ENCODE measurements at regions of chr6 and their contacts with region 1.

Region 1: DNA sequence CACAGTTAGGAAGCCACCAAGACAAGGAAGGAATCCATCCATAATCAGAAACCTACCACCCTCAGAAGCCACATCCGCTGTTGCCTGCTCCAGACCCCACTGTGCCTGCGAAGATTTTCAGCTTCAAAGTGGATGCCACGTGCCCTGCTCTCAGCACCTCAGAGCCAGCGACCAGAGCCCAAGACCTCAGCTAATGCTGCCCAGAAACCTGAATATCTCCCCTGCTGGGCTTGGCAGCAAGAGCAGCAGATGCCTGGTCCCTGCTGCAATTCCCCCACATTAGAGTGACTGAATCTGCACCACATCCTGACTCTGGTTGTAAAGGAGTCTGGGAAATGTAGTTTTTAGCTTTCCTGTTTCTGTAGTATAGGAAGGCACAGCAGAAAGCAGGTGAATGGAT is 10.7 kb upstream of the ULBP3 start:
- DNase-seq: peak in 1 of 2 donors; percentile 43
- H3K4me3 ChIP-seq: no peak overlapping the region
- H3K27ac ChIP-seq: no peak overlapping the region
- H3K4me1 ChIP-seq: no peaks in the 10 kb centered on the region
- H3K27me3 ChIP-seq: no peaks in the 10 kb centered on the region
- CTCF ChIP-seq: no peak

Region 2: GRCh38 chr6:150004783-150005717 is 74.6 kb before region 1 on chr6:
- intact Hi-C with region 1: no loop called
- DNase-seq: peak; percentile 77 to 95
- H3K4me3 ChIP-seq: peak overlapping the region; percentile 45 to 78
- H3K27ac ChIP-seq: no peak overlapping the region
- H3K4me1 ChIP-seq: peaks cover 4 to 11% of the 10 kb centered on the region in 2 donors
- H3K27me3 ChIP-seq: peaks cover 11% of the 10 kb centered on the region
- CTCF ChIP-seq: no peak

Region 3: GRCh38 chr6:150334790-150335783 is 255.5 kb after region 1 on chr6:
- intact Hi-C with region 1: loop called (anchors 1 kb)
- DNase-seq: no peak
- H3K4me3 ChIP-seq: no peak overlapping the region
- H3K27ac ChIP-seq: no peak overlapping the region
- H3K4me1 ChIP-seq: no peaks in the 10 kb centered on the region
- H3K27me3 ChIP-seq: no peaks in the 10 kb centered on the region
- CTCF ChIP-seq: peak; percentile 43 to 77 (median 57)

Region 4: GRCh38 chr6:150395398-150396009 is 315.9 kb after region 1 on chr6:
- intact Hi-C with region 1: loop called (anchors 1 kb)
- DNase-seq: no peak
- H3K4me3 ChIP-seq: no peak overlapping the region
- H3K27ac ChIP-seq: no peak overlapping the region
- H3K4me1 ChIP-seq: no peaks in the 10 kb centered on the region
- H3K27me3 ChIP-seq: no peaks in the 10 kb centered on the region
- CTCF ChIP-seq: peak; percentile 39 to 71 (median 63)